Aorta (tissue), 5 donors: ENCODE measurements at regions of chr6 and their contacts with region 1.

Region 1: DNA sequence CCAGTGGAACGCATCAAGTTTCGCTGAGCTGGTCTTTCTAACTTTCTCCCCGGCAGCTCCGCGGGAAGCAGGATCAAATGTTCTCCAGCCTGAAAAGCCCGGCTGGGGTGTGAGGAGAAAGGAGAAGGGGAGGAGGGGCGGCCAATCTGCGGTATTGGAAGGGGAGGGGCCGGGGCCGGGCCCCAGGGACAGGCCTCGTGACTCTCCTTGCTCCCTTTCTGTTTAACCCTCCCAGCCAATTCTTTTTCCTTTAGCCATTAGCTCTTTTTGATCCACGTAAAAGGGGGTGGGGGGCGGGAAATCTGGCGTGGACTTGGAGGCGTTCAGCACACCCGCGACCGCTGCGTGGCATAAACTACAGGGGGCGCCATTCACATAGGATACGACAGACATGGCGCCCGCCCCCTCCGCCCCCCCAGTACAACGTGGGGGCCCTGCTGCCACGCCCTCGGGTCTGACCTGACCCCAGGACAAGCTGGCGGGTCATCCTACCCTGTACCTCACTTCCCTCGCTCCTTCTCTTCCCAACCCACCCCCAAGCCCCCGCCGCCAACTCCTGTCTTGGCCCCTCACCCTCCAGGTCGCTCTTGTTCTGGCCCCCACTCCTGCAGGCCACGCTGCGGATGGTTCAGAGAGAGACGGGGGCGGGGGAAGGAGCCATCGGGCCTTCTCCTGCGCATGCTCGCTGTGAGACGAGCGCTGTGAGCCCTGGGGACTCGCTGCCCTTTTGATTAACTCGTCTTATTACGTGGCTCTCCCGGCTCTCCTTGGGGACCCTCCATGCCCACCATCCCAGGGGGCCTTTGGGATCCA is 7.8 kb upstream of the MDGA1 start:
- DNase-seq: peak; percentile 91 to 94
- ATAC-seq: peak; percentile 86
- H3K4me3 ChIP-seq: peak overlapping the region; percentile 28 to 81
- H3K27ac ChIP-seq: peak overlapping the region in 1 of 2 donors; percentile 35
- H3K4me1 ChIP-seq: no peaks in the 10 kb centered on the region
- H3K27me3 ChIP-seq: no peaks in the 10 kb centered on the region

Region 2: DNA sequence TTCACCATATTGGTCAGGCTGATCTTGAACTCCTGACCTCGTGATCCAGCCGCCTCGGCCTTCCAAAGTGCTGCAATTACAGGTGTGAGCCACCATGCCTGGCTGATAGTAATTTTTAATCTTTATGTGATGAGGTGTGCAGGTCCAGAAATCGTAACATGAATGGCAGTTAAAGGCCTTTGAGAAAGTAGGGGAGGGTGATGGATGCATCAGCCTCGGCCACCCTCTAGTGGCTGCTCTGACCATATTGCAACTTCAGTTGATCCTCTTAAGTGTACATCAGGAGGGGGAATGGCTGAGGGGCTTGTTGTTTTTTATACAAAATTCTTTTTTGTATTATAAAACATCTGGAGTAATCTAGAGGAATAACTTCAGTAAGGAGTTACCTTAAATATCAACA is 307.1 kb after region 1 on chr6:
- intact Hi-C with region 1: loop called in 1 of 2 experiments (anchors 10 kb)
- DNase-seq: no peak
- ATAC-seq: no peak
- H3K4me3 ChIP-seq: no peak overlapping the region
- H3K27ac ChIP-seq: no peak overlapping the region
- H3K4me1 ChIP-seq: peaks cover 2 to 5% of the 10 kb centered on the region in 2 donors
- H3K27me3 ChIP-seq: no peaks in the 10 kb centered on the region